ENCODE measurements at regions of chr5 and their contacts with region 1.

Region 1: DNA sequence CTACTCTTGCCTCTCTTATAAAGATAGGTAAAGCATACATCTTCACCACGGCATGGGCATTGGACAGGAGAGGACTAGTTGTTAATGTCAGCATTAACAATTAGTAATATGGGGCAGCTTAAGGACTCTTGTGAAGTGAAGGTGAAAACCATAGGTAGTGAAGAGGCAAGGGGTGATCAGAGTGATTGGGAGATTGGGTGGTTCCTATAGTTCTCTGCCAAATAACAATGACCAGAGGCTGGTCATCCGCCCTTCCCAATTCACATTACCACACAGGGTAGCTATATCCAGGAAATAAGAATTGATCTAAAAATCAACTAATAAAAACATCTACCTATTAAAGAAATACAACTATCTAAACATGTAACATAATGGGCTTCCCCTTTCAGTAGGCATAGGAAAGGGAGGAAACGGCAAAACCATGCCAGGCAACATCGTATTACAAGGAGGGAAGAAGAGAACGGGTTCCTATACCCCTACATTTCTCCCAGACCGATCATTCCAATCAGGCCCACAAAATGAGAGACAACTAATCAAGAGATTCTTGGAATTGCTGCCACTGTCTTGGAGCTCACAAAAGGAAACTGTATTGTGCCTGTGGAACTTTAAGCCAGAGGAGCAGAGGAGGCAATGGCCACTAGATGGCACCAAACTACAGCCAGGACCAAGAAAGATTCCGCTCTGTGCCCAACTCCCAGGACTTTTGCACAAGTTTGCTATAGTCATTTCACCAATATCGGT is 121.6 kb downstream of the FBXL17 start:
- DNase-seq: peak; percentile 73
- ATAC-seq: peak; percentile 99
- H3K4me3 ChIP-seq: no peak overlapping the region
- H3K27ac ChIP-seq: no peak overlapping the region
- H3K4me1 ChIP-seq: no peaks in the 10 kb centered on the region
- H3K27me3 ChIP-seq: no peaks in the 10 kb centered on the region
- CTCF ChIP-seq: peak; percentile 52 to 97 (median 93); a peak in 5 of 6 replicates
- POLR2A ChIP-seq: no peak
- RAD21 ChIP-seq: peak; percentile 87

Region 2: GRCh38 chr5:108238936-108239887 is 21.1 kb before region 1 on chr5:
- CTCF ChIA-PET with region 1: interaction called, 10 read pairs
- POLR2A ChIA-PET with region 1: no interaction called
- RAD21 ChIA-PET with region 1: no interaction called
- intact Hi-C with region 1: no loop called
- DNase-seq: peak; percentile 26
- ATAC-seq: peak; percentile 89
- H3K4me3 ChIP-seq: no peak overlapping the region
- H3K27ac ChIP-seq: no peak overlapping the region
- H3K4me1 ChIP-seq: peaks cover 9 to 11% of the 10 kb centered on the region in 2 experiments
- H3K27me3 ChIP-seq: no peaks in the 10 kb centered on the region
- CTCF ChIP-seq: peak in 1 of 3 experiments; percentile 17; a peak in 2 of 6 replicates
- POLR2A ChIP-seq: no peak
- RAD21 ChIP-seq: no peak

Region 3: DNA sequence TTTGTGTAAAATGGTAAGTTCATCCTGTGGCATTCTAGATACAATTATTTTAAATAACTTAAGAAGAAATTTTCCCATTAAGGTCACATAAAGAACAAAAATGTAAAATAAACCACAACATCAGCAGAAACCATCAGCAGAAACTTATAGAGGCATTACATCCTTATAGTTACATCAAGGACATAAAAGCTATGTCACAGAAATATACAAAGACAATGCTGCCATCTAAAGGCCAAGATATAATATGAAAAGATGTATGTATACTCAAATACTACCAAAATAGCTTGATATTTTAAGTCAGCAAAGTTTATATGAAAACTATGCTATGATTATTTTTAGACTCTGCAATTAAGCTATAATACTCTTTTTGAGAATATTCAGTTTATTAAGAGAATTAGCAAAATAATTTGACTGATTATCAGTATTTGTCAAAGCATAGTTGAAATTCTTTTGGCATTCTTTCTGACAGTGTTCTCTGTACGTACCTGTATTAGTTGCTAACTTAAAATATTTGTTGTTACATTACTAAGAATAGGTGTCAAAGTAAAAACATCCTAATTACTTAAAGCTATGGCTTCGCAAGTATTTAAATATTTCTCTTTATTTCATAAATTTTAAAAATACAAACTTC is 85.4 kb after region 1 on chr5:
- CTCF ChIA-PET with region 1: interaction called, 58 read pairs
- POLR2A ChIA-PET with region 1: no interaction called
- RAD21 ChIA-PET with region 1: interaction called, 7 to 10 read pairs
- intact Hi-C with region 1: loop called (anchors 1 kb)
- DNase-seq: peak; percentile 13
- ATAC-seq: peak; percentile 62
- H3K4me3 ChIP-seq: no peak overlapping the region
- H3K27ac ChIP-seq: no peak overlapping the region
- H3K4me1 ChIP-seq: no peaks in the 10 kb centered on the region
- H3K27me3 ChIP-seq: no peaks in the 10 kb centered on the region
- CTCF ChIP-seq: peak in 2 of 3 experiments; percentile 42 to 58; a peak in 3 of 6 replicates
- POLR2A ChIP-seq: no peak
- RAD21 ChIP-seq: peak; percentile 57

Measured in HCT116 (cell line).